ENCODE measurements at regions of chr14 and their contacts with region 1.

Region 1: GRCh38 chr14:40494483-40494882 is 1062.2 kb upstream of the FBXO33 start:
- DNase-seq: no peak
- ATAC-seq: no peak
- H3K4me3 ChIP-seq: no peak overlapping the region
- H3K27ac ChIP-seq: no peak overlapping the region
- H3K4me1 ChIP-seq: no peaks in the 10 kb centered on the region
- H3K27me3 ChIP-seq: no peaks in the 10 kb centered on the region
- CTCF ChIP-seq: no peak
- POLR2A ChIP-seq: no peak
- RAD21 ChIP-seq: no peak

Region 2: GRCh38 chr14:40467969-40468368 is 26.5 kb before region 1 on chr14:
- CTCF ChIA-PET with region 1: no interaction called
- POLR2A ChIA-PET with region 1: no interaction called
- dilution Hi-C with region 1: no loop called
- in situ Hi-C with region 1: no loop called
- intact Hi-C with region 1: loop called (anchors 1 kb)
- DNase-seq: no peak
- ATAC-seq: no peak
- H3K4me3 ChIP-seq: no peak overlapping the region
- H3K27ac ChIP-seq: no peak overlapping the region
- H3K4me1 ChIP-seq: no peaks in the 10 kb centered on the region
- H3K27me3 ChIP-seq: no peaks in the 10 kb centered on the region
- CTCF ChIP-seq: no peak
- POLR2A ChIP-seq: no peak
- RAD21 ChIP-seq: no peak

Measured in IMR-90 (cell line).